ENCODE measurements at regions of chr12 and their contacts with region 1.

Region 1: DNA sequence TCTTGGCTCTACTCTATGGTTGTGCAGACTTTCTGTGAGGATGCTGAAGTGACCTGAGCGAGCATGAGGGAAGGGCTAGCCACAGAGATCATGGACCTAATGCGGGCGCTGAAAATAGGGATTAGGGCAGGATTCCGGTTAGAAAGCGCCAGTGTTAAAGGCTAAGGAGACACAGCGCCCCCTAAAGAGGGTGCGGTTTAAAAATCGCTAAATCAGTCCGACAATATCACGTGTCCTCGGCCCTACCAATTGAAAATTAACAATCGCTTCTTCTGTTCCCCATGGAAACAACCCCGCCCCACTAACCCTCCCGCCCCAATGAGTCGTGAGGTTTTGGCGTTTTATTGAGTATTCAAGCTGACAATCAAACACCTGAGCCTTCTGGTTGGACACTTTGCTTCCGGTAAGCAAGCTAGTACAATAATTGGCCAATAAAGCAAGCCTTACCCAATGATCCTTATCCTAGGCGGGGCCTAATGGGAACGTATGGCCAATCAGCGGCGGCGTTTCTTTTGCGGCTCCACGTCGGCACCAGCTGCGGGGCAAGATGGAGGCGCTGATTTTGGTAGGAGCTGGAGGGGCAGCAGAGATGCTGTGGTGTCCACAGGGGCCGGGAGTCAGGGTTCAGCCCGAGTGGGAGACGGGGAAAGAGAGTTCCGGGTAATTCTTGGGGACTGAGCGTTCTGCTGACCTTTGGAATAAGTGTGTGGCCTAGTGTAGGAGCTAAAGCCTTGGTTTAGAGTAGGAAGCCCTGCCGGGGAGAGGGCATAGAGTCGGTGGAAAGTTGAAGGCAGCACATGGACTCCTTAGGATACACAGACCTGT is at the start of gene COPZ1:
- DNase-seq: peak; percentile 99
- ATAC-seq: peak; percentile 96
- H3K4me3 ChIP-seq: peak within 1 kb of the TSS; percentile 78
- H3K27ac ChIP-seq: peak within 1 kb of the TSS; percentile 74
- H3K4me1 ChIP-seq: peaks cover 15% of the 10 kb centered on the region
- H3K27me3 ChIP-seq: no peaks in the 10 kb centered on the region
- CTCF ChIP-seq: peak; percentile 86
- total RNA-seq, gene COPZ1: 121 and 156 TPM in 2 replicates

Region 2: DNA sequence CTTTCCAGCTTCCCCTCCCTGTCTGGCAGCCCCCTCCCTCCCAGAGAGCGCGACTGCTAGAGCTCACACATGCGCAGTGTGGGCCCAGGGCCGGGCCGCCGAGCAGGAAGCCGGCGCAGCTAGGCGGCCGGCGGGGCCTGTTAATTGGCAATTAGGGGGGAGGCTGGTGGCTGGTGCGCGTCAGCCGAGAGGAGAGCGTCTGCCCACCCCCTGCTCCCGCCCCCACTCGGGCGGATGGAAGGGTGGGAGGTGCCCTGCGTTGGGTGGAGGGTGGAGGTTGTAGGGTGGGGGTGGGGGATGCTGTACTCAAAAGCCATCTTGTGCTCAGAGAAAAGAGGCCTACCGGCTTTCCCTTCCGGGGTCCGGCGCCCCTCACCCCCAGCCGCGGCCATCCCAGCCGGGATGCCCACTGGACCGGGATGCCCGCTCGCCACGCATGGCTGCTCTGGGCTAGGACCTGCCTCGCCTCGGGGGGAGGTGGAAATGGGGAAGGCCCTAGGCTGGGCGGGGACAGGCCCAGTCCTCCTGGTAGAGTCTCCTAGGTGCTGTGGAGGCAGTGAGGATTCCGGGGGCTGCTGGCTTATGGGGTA is 306.9 kb before region 1 on chr12:
- CTCF ChIA-PET with region 1: no interaction called
- POLR2A ChIA-PET with region 1: interaction called, 15 read pairs
- intact Hi-C with region 1: no loop called
- DNase-seq: peak; percentile 86
- ATAC-seq: peak; percentile 73
- H3K4me3 ChIP-seq: peak overlapping the region; percentile 96
- H3K27ac ChIP-seq: peak overlapping the region; percentile 38
- H3K4me1 ChIP-seq: peaks cover 21% of the 10 kb centered on the region
- H3K27me3 ChIP-seq: no peaks in the 10 kb centered on the region
- CTCF ChIP-seq: no peak

Region 3: GRCh38 chr12:54279866-54280467 is 44.9 kb before region 1 on chr12 and contains the start of gene CBX5:
- CTCF ChIA-PET with region 1: interaction called, 6 read pairs
- POLR2A ChIA-PET with region 1: interaction called, 40 read pairs
- intact Hi-C with region 1: loop called (anchors 1 kb)
- DNase-seq: peak; percentile 98
- ATAC-seq: peak; percentile 40
- H3K4me3 ChIP-seq: peak within 1 kb of the TSS; percentile 88
- H3K27ac ChIP-seq: peak within 1 kb of the TSS; percentile 87
- H3K4me1 ChIP-seq: peaks cover 31% of the 10 kb centered on the region
- H3K27me3 ChIP-seq: no peaks in the 10 kb centered on the region
- CTCF ChIP-seq: no peak
- total RNA-seq, gene CBX5: 14.6 and 14.9 TPM in 2 replicates

Region 4: DNA sequence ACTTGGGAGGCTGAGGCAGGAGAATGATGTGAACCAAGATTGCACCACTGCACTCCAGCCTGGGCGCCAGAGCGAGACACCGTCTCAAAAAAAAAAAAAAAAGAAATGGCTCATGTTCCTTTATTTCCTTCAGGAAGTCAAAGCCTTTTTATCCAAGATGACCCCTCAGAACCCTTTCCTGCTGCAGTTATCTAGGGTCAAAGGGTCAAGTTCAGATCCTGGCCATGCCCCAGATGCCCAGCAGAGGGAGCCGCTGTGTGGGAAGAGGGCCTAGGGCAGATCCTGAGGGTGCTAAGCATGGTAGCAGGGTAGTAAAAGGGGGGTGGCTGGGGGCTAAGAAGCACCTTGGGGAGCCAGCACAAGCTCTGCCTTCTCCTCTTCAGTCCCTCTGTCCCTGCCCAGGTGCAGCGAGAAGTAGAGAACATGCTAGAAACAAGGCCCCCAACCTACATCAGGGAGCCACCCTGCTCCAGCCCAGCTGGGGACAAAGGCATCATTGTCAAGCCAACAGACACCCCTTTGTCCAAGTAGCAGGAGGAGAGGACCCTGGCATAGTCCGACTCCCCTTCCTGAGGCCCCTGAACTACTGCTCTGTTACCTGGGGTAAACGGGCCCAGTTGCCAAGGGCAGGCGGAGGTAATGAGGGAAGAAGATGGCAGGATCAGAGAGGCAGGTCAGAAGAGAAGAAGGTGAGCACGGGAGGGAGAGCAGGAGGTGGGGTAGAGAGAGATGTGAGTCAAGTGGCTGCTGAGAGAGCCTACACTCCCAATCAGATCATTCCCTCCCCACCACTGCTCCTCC is 30.5 kb before region 1 on chr12:
- CTCF ChIA-PET with region 1: interaction called, 10 read pairs
- POLR2A ChIA-PET with region 1: interaction called, 4 read pairs
- intact Hi-C with region 1: loop called (anchors 2 kb)
- DNase-seq: peak; percentile 49
- ATAC-seq: peak; percentile 44
- H3K4me3 ChIP-seq: no peak overlapping the region
- H3K27ac ChIP-seq: no peak overlapping the region
- H3K4me1 ChIP-seq: no peaks in the 10 kb centered on the region
- H3K27me3 ChIP-seq: no peaks in the 10 kb centered on the region
- CTCF ChIP-seq: peak; percentile 84

Region 5: GRCh38 chr12:54359033-54359761 is 34.4 kb after region 1 on chr12:
- CTCF ChIA-PET with region 1: interaction called, 12 read pairs
- POLR2A ChIA-PET with region 1: interaction called, 5 read pairs
- intact Hi-C with region 1: loop called (anchors 1 kb)
- DNase-seq: peak; percentile 99
- ATAC-seq: peak; percentile 93
- H3K4me3 ChIP-seq: peak overlapping the region; percentile 81
- H3K27ac ChIP-seq: peak overlapping the region; percentile 74
- H3K4me1 ChIP-seq: peaks cover 28% of the 10 kb centered on the region
- H3K27me3 ChIP-seq: no peaks in the 10 kb centered on the region
- CTCF ChIP-seq: no peak

Region 6: GRCh38 chr12:54658306-54659264 is 333.8 kb after region 1 on chr12:
- CTCF ChIA-PET with region 1: no interaction called
- POLR2A ChIA-PET with region 1: no interaction called
- intact Hi-C with region 1: no loop called
- DNase-seq: peak; percentile 60
- ATAC-seq: peak; percentile 48; the same call in 1 of the 2 replicates
- H3K4me3 ChIP-seq: no peak overlapping the region
- H3K27ac ChIP-seq: no peak overlapping the region
- H3K4me1 ChIP-seq: no peaks in the 10 kb centered on the region
- H3K27me3 ChIP-seq: peaks cover 58% of the 10 kb centered on the region
- CTCF ChIP-seq: peak; percentile 68